Mucosa of descending colon (tissue), 3 donors: ENCODE measurements at regions of chr11 and their contacts with region 1.

Region 1: GRCh38 chr11:61947486-61948210 is 2.5 kb upstream of the BEST1 start:
- DNase-seq: peak; percentile 79 to 90 (median 83)
- ATAC-seq: peak; percentile 93
- H3K4me3 ChIP-seq: no peak overlapping the region
- H3K4me1 ChIP-seq: no peaks in the 10 kb centered on the region
- CTCF ChIP-seq: peak; percentile 71

Region 2: DNA sequence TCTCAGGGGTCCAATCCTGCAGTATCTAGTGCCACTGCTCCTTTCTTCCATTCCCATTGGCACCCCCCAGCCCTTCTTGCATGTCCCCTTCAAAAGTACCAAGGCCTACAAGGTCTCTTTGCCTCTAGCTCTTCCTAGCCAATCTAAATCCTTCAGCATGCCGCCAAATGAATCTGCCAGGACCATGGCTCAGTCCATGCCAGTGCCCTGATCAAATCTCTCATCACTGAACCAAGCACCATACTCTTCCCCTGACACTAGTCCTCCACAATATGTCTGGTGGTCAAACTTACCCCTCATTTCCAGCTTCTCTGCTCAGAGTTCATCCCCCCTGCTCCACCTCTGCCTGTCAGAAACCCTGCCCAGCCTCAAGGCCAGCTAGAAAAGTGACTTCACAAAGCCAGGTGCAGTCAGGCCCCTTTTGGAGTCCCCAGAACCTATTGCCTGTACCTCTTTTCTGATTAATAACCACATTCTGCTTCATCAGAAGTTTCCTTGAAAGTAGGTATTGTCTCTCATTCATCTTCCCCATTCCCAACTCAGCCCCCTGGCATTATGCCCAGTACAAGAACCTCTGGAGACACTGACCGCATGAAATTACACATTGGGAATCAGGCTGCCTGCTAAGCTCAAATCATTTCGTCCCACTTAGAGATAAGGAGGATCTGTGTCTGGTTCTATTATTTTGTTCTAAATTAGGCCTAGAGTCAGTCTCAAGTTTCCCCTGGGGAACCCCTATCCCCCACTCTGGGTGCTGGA is 143.6 kb before region 1 on chr11:
- intact Hi-C with region 1: loop called in 1 of 2 experiments (anchors 10 kb)
- DNase-seq: no peak
- ATAC-seq: no peak
- H3K4me3 ChIP-seq: no peak overlapping the region
- H3K4me1 ChIP-seq: no peaks in the 10 kb centered on the region
- CTCF ChIP-seq: no peak

Region 3: GRCh38 chr11:61899146-61899841 is 48.4 kb before region 1 on chr11:
- intact Hi-C with region 1: loop called (anchors 2 to 10 kb)
- DNase-seq: peak; percentile 90
- ATAC-seq: peak; percentile 95
- H3K4me3 ChIP-seq: no peak overlapping the region
- H3K4me1 ChIP-seq: no peaks in the 10 kb centered on the region
- CTCF ChIP-seq: peak; percentile 99